ENCODE measurements at regions of chr17 and their contacts with region 1.

Region 1: GRCh38 chr17:48610282-48611211 is at the start of gene HOXB7:
- DNase-seq: peak; percentile 49
- H3K4me3 Mint-ChIP-seq: peak within 1 kb of the TSS; percentile 86
- H3K27ac Mint-ChIP-seq: peak within 1 kb of the TSS; percentile 32
- H3K4me1 Mint-ChIP-seq: peaks cover 34% of the 10 kb centered on the region
- H3K27me3 Mint-ChIP-seq: peaks cover 76% of the 10 kb centered on the region
- total RNA-seq, gene HOXB7: 0.49 and 0.51 TPM in 2 replicates

Region 2: DNA sequence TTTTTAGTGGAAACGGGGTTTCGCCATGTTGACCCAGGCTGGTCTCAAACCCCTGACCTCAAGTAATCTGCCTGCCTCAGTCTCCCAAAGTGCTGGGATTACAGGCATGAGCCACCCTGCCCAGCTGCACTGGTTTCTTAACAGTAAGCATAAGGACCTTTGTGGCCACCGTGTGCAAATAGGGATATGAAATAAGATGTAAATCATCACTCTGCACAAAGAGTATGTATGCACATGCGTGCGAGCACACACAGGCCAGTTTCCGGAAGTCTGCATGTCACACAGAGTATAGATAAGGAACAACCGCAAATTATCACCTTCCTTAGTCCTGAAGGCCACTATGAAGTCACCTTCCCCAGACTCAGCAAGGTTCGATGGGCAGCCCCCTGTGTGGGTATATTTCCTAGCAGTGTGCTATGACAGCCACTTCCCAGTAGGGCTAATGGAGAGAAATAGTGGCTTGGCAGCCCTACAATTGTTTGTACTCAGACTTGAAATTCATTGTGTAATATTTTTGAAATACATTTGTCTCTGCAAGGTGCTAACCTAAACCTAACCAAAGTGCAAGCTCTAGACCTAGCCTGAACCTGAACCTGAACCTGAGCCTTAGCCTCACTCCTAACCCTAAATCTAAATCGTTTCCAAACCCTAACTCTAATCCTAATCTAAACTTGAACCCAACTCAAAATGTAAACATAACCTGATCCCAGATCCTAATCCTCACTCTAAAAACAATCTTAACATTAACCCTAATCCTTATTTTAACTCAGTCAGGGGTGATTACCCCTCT is 132.1 kb before region 1 on chr17:
- intact Hi-C with region 1: no loop called
- DNase-seq: peak; percentile 30
- H3K4me3 Mint-ChIP-seq: peak overlapping the region; percentile 39
- H3K27ac Mint-ChIP-seq: peak overlapping the region; percentile 87
- H3K4me1 Mint-ChIP-seq: peaks cover 31% of the 10 kb centered on the region
- H3K27me3 Mint-ChIP-seq: no peaks in the 10 kb centered on the region

Region 3: DNA sequence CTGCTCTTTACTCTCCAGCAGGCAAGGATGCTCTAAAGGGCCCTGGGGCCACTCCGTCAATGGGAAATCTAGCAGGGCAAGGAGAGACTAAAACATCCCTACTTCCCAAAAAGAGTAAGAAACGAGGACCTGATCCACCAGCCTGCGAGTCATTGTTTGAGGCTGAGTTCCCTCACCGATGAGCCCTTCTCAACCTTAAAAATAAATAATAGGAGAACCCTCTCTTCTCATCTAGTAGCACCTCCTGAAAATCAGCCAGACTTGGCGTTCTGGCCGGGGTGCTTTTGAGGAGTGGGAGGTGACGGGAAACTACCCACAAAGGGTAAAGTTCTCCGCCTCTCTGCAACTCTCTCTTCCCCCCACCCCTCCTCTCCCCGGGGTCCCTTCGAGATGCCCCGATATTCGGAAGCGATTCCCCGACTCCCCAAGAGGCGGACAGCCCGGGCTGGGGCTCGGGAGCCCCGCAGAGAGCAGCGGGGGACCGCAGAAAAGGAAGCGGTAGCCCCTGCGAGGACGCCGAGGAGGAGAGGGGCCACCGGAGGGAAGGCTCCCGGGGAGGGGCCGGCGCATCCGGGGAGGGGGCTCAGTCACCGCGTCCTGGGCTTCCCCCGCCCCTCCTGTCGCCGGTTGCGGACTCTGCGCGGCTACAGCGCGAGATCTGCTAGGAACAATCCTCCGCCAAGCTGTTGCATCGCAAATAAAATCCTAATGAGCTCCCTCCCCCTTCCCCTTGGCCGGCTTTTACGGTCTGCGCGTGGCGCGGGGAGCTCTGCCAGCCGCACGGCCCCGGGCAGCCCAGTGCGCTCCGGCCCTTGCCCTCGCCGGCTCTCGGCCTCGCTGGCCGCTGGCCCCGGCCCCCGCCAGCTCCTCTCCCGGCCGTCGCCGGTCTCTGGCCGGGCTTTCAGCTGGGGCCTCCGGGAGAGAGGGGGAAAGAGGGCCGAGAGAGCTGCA is 14.3 kb after region 1 on chr17:
- intact Hi-C with region 1: loop called (anchors 1 kb)
- DNase-seq: no peak
- H3K4me3 Mint-ChIP-seq: peak overlapping the region; percentile 37
- H3K27ac Mint-ChIP-seq: no peak overlapping the region
- H3K4me1 Mint-ChIP-seq: peaks cover 11% of the 10 kb centered on the region
- H3K27me3 Mint-ChIP-seq: peaks cover 85% of the 10 kb centered on the region